Activated CD8-positive, alpha-beta memory T cell treated with anti-CD3 and anti-CD28 coated beads, Interleukin-2, amount 10 ng/mL, durations not matched to agents 7 days and 5 days (primary cell): ENCODE measurements at regions of chr11 and their contacts with region 1.

Region 1: GRCh38 chr11:102293873-102294601 is 23.2 kb upstream of the BIRC3 start:
- DNase-seq: no peak
- ATAC-seq: peak; percentile 98
- H3K4me3 Mint-ChIP-seq: peak overlapping the region; percentile 88
- H3K27ac Mint-ChIP-seq: peak overlapping the region; percentile 97
- H3K4me1 Mint-ChIP-seq: peaks cover 34% of the 10 kb centered on the region
- H3K27me3 Mint-ChIP-seq: no peaks in the 10 kb centered on the region

Region 2: GRCh38 chr11:102177974-102178631 is 115.9 kb before region 1 on chr11:
- CTCF ChIA-PET with region 1: no interaction called
- DNase-seq: no peak
- ATAC-seq: no peak
- H3K4me3 Mint-ChIP-seq: no peak overlapping the region
- H3K27ac Mint-ChIP-seq: no peak overlapping the region
- H3K4me1 Mint-ChIP-seq: no peaks in the 10 kb centered on the region
- H3K27me3 Mint-ChIP-seq: peaks cover 2% of the 10 kb centered on the region

Region 3: DNA sequence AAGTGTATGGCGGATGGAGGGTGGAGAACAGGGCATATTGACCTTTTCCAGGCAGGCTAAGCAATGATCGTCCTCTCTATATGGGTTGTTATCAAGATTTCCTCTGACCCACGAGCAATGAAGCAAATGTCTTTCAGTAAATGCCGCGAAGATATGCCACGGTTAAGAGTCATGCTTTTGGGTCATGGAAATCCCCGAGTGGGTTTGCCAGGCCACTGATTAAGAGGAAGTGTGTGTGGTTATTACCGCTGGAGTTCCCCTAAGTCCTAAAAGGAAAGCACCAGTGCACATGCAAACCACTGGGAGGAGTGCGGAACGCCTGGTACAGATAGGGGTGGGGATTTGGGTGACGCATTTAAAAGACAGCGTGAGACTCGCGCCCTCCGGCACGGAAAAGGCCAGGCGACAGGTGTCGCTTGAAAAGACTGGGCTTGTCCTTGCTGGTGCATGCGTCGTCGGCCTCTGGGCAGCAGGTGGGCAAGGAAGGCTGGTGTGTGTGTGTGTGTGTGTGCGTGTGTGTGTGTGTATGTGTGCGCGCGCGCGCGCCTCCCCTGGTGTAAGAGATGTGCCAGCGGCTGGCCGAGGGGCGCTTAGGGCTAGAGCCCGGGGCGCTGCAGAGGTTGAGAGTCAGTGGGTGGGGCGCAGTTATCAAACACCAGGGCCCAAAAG is 23.2 kb after region 1 on chr11 and contains the start of gene BIRC3:
- CTCF ChIA-PET with region 1: interaction called, 75 read pairs
- DNase-seq: peak; percentile 97
- ATAC-seq: peak; percentile 83
- H3K4me3 Mint-ChIP-seq: peak within 1 kb of the TSS; percentile 87
- H3K27ac Mint-ChIP-seq: peak within 1 kb of the TSS; percentile 88
- H3K4me1 Mint-ChIP-seq: peaks cover 63% of the 10 kb centered on the region
- H3K27me3 Mint-ChIP-seq: no peaks in the 10 kb centered on the region
- total RNA-seq, gene BIRC3: 46.4 to 231 TPM

Region 4: DNA sequence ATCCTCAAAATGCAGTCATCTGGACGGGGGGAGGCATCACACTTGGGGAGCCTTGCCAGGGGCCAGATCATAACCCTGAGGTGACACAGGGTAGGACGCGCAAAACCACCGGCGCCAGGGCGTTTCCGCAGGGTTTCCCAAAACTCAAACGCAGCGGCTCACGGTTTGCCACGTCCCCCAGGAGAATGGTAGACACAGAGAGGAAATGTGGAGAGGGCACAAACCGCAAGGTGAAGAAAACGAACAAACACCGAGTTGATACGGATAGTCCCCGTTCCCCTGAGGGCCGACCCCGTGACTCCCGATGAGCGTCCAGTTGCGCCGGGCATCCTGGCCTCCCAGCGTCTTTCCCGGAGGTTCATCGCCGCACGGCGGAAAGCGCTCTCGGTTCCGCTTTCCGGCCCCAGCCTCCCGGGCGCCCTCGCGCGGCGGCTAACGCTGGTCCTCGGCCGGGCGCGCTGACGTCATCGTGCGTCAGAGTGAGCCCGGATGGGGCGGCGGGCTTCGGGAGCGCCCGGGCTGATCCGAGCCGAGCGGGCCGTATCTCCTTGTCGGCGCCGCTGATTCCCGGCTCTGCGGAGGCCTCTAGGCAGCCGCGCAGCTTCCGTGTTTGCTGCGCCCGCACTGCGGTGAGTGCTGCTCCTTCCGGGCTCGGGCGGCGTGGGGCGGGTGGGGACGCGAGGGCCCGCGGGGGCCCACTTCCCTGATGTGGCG is 52.9 kb after region 1 on chr11 and contains the start of gene BIRC2:
- CTCF ChIA-PET with region 1: interaction called, 110 read pairs
- DNase-seq: peak; percentile 95
- ATAC-seq: peak; percentile 95
- H3K4me3 Mint-ChIP-seq: peak within 1 kb of the TSS; percentile 88
- H3K27ac Mint-ChIP-seq: peak within 1 kb of the TSS; percentile 97
- H3K4me1 Mint-ChIP-seq: peaks cover 31% of the 10 kb centered on the region
- H3K27me3 Mint-ChIP-seq: no peaks in the 10 kb centered on the region
- total RNA-seq, gene BIRC2: 30.7 to 30.9 TPM

Region 5: DNA sequence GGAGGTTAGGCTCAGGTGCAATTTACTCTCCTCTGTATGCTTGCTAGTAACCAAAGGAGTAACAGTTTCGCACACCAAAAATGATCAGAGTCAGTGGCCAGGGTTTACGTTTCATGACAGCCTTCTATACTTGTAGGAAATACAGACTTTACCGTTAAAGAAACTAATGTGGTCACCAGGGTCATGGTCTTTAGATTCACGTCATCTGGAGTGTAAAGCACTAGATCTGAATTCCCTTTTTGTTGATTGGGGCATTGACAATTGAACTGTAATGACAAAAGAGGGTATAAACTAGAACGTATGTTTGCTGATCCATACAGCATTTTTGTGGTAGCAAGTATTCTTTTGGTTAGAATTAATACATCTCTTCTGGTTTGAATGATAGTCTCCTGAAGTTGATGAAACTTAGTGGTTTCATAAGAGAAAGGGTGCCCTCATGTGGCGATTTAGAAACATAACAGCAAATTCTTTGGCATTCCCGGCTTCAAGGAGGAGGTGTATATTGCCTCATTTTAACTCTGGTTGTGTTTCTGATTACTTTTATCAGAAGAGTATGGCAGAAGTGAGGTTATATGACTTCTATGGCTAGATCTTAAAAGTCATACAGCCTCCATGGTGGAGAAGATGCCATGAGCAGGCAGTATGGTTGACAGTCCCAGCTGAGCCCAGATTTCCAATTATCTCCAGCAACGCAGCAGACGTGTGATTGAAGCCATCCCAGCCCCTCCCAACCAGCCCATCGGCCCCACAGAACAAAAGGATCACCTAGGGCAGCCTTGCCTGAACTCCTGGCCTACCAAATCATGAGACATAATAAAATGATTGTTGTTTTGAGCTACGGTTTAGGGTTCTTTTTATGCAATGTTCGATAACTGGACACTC is 201.4 kb after region 1 on chr11:
- CTCF ChIA-PET with region 1: interaction called, 19 read pairs
- DNase-seq: peak; percentile 45
- ATAC-seq: peak; percentile 78
- H3K4me3 Mint-ChIP-seq: peak overlapping the region; percentile 15
- H3K27ac Mint-ChIP-seq: peak overlapping the region; percentile 39
- H3K4me1 Mint-ChIP-seq: peaks cover 16% of the 10 kb centered on the region
- H3K27me3 Mint-ChIP-seq: peaks cover 22% of the 10 kb centered on the region